H1 (cell line): ENCODE measurements at regions of chr11 and their contacts with region 1.

Region 1: GRCh38 chr11:118435893-118436624 is at the start of gene KMT2A:
- DNase-seq: peak; percentile 89 to 100
- H3K4me3 ChIP-seq: peak within 1 kb of the TSS; percentile 69 to 91 (median 83)
- H3K27ac ChIP-seq: peak within 1 kb of the TSS; percentile 65
- H3K4me1 ChIP-seq: peaks cover 0 to 18% (median 4%) of the 10 kb centered on the region in 4 experiments; a peak in 6 of 7 replicates
- H3K27me3 ChIP-seq: no peaks in the 10 kb centered on the region
- CTCF ChIP-seq: no peak
- EP300 ChIP-seq: no peak
- POLR2A ChIP-seq: peak in 1 of 2 experiments; percentile 49; a peak in 1 of 3 replicates
- RAD21 ChIP-seq: no peak; a peak in 1 of 4 replicates
- total RNA-seq, gene KMT2A: 59.1 and 62.1 TPM in 2 replicates

Region 2: DNA sequence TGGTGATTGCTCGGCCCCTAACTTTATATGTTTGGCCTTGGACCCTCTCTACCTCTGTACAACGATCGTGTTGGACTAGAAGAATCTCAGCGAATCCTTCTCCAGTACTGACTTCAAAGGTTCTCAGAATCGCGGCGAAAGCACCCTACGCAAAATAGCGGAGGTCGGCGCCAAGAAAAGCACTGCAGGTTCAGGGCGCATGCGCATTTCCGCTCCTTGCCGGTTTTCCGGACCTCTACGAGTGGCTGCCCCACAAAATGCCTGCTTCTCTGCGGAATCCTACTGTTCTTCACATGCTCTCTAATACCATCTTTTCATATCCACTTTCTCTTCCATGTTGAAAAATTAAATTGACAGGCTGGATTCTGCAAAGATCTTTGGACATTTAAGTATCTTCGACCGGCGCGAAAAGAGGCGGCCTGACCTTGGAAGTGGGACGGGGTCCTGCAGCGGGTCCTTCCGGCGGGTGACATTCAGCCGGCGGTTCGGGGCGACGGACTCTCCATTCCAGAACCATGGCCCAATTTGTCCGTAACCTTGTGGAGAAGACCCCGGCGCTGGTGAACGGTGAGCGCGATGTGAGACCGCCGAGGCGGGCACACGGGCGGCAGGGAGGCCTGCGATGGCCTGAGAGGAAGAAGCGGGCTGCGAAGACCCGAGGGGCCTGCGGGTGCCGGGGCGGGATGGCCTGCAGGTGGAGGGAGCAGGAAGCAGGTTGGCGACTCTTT is 34.7 kb before region 1 on chr11 and contains the start of gene ATP5MG:
- CTCF ChIA-PET with region 1: interaction called, 3 read pairs
- POLR2A ChIA-PET with region 1: interaction called, 13 read pairs
- DNase-seq: peak; percentile 72 to 90
- H3K4me3 ChIP-seq: peak within 1 kb of the TSS; percentile 81 to 95 (median 92)
- H3K27ac ChIP-seq: peak within 1 kb of the TSS; percentile 88
- H3K4me1 ChIP-seq: peaks cover 0 to 6% (median 0%) of the 10 kb centered on the region in 4 experiments; a peak in 2 of 7 replicates
- H3K27me3 ChIP-seq: no peaks in the 10 kb centered on the region
- CTCF ChIP-seq: no peak
- EP300 ChIP-seq: no peak
- POLR2A ChIP-seq: peak; percentile 67 to 78; a peak in 2 of 3 replicates
- RAD21 ChIP-seq: no peak
- total RNA-seq, gene ATP5MG: 237 and 251 TPM in 2 replicates

Region 3: DNA sequence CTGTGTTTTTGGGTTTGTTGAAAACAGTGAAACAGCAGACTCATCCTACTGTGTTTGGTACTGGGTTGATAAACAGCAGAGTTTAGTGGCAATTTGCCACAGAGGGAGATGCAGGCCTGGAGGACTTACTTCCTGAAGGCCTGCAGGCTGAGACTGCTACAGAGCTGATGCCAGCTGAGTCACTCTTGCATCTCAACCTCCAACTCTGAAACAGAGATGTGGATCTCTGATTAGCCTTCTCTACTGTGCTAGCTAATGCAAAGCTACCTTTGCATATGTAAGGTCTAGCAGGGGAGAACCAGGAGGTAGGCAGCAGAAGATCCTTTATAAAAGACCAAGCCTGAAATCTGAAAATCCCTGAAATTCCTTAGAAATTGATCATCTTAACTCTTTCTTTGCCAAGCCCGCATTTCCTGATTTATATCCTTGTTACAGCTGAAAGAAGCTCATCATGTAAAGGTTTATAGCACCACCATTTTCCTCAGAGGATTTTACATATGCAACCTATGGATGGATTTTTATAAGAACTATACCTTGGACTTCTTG is 20.2 kb before region 1 on chr11:
- CTCF ChIA-PET with region 1: interaction called, 3 read pairs
- POLR2A ChIA-PET with region 1: interaction called, 16 read pairs
- DNase-seq: peak in 1 of 2 experiments; percentile 49
- H3K4me3 ChIP-seq: peak overlapping the region in 1 of 4 experiments; percentile 14; a peak in 1 of 8 replicates
- H3K27ac ChIP-seq: 0 out of 2 replicates have a peak overlapping the region, but pooled peaks have one; percentile 17
- H3K4me1 ChIP-seq: peaks cover 0 to 4% (median 2%) of the 10 kb centered on the region in 4 experiments; a peak in 3 of 7 replicates
- H3K27me3 ChIP-seq: no peaks in the 10 kb centered on the region
- CTCF ChIP-seq: no peak
- EP300 ChIP-seq: peak in 1 of 2 experiments; percentile 45; a peak in 1 of 3 replicates
- POLR2A ChIP-seq: no peak; a peak in 1 of 3 replicates
- RAD21 ChIP-seq: no peak; a peak in 1 of 4 replicates